ENCODE measurements at regions of chr2 and their contacts with region 1.

Region 1: DNA sequence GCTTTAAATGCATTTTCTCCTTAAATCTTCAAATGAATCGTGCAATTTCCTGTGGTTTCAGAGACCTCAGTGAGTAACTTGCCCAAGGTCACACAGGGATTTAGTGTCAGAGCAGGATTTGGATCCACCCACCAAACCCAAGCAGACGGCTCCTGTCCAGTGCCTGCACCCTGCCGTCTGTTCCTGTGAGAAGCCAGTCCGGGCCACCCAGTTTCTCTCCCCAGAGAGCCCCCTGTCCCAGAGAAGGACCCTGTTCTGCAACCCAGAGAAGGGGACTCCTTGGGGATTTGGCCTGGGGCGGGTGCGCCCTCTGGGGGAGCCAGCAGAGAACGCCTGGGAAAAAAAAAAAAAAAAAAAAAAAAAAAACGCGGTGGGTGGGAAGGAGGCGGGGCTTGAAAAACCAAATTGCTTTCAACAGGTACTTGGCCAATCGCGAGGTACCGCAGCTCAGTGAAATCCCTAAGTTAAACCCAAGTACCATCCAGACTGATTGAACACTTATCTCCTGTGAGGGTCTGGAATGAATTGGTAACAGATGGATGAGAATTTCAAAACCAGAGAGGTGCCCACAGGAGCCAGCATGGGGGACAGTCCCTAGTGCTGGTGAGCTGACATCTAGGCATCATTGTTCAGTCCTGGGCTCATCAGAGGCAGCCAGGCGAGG is 30.9 kb upstream of the REEP1 start:
- DNase-seq: no peak
- H3K4me3 ChIP-seq: peak overlapping the region in 2 of 4 donors; percentile 22 to 46
- H3K27ac ChIP-seq: no peak overlapping the region
- H3K4me1 ChIP-seq: peaks cover 4 to 17% (median 9%) of the 10 kb centered on the region in 3 donors
- H3K27me3 ChIP-seq: no peaks in the 10 kb centered on the region
- CTCF ChIP-seq: peak in 5 of 6 experiments; percentile 27 to 49 (median 31)
- POLR2A ChIP-seq: no peak

Region 2: GRCh38 chr2:86123328-86123925 is 244.9 kb before region 1 on chr2:
- intact Hi-C with region 1: no loop called
- DNase-seq: no peak
- H3K4me3 ChIP-seq: no peak overlapping the region
- H3K27ac ChIP-seq: no peak overlapping the region
- H3K4me1 ChIP-seq: no peaks in the 10 kb centered on the region
- H3K27me3 ChIP-seq: no peaks in the 10 kb centered on the region
- CTCF ChIP-seq: no peak
- POLR2A ChIP-seq: no peak

Region 3: GRCh38 chr2:86221066-86221684 is 147.1 kb before region 1 on chr2:
- intact Hi-C with region 1: loop called (anchors 5 kb)
- DNase-seq: no peak
- H3K4me3 ChIP-seq: no peak overlapping the region
- H3K27ac ChIP-seq: peak overlapping the region in 3 of 4 donors; percentile 7 to 62 (median 25)
- H3K4me1 ChIP-seq: peaks cover 8 to 57% (median 36%) of the 10 kb centered on the region in 3 donors
- H3K27me3 ChIP-seq: no peaks in the 10 kb centered on the region
- CTCF ChIP-seq: peak; percentile 75 to 94 (median 90)
- POLR2A ChIP-seq: no peak

Measured in esophagus squamous epithelium (tissue), 5 donors.